ENCODE measurements at regions of chr11 and their contacts with region 1.

Region 1: GRCh38 chr11:96342961-96343711 is at the start of gene MAML2:
- DNase-seq: peak; percentile 85
- H3K4me3 Mint-ChIP-seq: peak within 1 kb of the TSS; percentile 94
- H3K27ac Mint-ChIP-seq: peak within 1 kb of the TSS; percentile 89
- H3K4me1 Mint-ChIP-seq: peaks cover 49% of the 10 kb centered on the region
- H3K27me3 Mint-ChIP-seq: no peaks in the 10 kb centered on the region
- total RNA-seq, gene MAML2: 10.0 and 10.1 TPM in 2 replicates

Region 2: DNA sequence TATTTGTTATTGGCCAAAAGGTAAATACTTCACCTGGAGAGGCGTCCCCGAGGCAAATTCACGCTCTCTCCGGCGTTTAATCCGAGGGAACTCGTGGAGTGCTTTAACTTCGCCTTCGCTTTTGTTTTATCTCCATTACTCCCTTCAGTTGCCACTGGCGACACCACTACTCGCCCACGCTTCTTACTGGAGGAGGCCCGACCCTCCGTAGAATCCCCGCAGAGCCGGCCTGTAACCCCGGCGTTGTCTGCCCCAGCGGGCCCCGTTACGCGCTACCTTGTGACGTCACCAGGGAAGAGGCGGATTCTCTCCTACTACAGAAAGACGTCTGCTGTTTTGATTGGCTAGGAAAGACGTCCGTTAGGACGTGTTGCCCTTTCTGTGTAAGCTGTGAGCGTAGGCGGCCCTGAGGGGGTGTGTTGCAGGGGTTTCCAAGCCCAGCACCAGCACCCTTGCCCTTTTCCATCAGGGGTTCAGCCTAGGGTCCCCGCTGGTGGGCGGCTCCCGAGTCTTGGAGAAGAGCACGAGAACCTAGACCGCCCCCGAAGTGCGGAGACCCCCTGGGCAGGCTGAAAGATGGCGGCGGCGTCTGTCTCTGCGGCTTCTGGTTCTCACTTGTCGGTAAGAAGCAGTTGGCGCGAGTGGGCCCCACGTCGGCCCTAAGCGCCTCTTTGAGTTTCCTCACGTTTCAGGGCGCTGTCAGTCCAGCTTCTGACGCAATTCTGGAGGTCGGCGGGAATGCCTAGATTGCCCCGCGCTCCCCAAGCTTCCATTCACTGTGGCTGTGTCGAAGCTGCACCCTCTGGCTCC is 552.8 kb before region 1 on chr11 and contains the start of gene CEP57:
- intact Hi-C with region 1: loop called (anchors 1 kb)
- DNase-seq: peak; percentile 93
- H3K4me3 Mint-ChIP-seq: peak within 1 kb of the TSS; percentile 96
- H3K27ac Mint-ChIP-seq: peak within 1 kb of the TSS; percentile 100
- H3K4me1 Mint-ChIP-seq: peaks cover 70% of the 10 kb centered on the region
- H3K27me3 Mint-ChIP-seq: no peaks in the 10 kb centered on the region
- total RNA-seq, gene CEP57: 77.1 and 77.7 TPM in 2 replicates

Region 3: DNA sequence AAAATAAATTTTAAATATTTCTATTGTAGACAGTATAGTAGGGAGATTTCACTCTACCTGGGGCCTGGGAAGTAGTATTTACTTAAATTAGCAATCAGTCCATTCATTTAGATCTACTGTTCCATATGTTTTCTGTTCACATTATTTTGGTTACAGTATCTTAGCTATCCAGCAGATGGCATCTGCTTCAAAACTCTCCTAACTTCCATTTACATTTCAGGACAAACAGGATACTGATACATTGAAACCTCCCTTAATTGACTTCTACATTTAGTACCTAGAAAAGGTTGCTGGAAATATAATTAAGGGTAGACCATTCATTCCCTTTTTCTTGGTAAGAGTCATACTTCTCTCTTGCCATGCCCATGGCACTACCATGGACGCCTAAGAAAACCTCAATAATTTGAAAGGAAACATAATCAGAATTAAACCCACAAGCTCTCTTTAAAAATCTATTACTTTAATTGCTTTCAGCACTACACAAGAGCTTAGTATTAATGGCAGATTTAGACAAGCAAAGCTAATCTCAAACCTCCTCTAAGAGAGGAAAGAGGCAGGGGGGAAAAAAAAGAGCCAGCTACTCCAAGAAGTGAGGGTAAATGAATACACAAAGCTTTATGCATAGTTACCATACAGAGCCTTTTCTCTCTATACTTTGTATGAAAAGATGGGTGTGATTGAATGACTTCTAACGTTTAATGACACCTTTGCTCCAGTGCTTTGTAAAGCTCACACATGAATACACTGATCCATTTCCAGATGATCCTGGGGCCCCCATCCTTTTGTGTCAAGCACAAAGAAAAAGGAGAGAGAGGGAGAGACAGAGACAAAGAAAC is 288.0 kb before region 1 on chr11:
- intact Hi-C with region 1: loop called (anchors 1 kb)
- DNase-seq: no peak
- H3K4me3 Mint-ChIP-seq: no peak overlapping the region
- H3K27ac Mint-ChIP-seq: no peak overlapping the region
- H3K4me1 Mint-ChIP-seq: peaks cover 60% of the 10 kb centered on the region
- H3K27me3 Mint-ChIP-seq: no peaks in the 10 kb centered on the region

Region 4: DNA sequence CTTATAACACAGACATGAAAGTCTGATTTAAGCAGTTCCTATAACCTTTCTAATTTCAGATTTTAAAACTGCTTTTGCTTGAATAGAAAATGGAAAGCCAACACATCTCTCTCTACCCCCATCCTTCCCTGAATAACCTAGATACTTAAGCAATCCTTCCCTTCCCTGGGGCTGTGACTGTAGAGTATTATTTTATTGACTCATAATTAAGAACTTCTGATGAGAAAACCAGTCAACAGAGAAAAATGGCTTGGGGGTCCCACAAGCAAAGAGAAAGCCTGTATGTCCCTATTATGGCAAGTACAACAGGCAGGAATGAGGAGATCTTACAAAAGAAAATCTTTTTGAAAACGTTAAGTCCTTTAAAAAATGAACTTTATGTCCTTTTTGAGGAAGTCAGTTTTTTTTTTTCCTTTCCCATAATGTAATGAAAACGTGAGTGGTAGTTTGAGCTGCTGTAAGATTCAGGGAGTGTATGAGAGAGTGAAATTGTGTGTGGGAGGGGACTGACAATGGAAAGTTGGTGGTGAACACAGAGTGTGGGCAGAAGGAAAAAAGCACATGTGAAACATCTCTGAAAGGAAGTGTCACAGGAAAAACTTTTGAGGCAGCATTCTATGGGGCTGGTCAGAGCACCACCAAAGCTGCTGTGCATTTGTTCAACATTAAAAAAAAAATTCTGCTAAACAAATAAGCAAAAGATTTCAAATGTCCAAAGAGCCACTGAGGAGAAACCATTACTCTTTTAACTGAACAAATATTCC is 154.7 kb before region 1 on chr11:
- intact Hi-C with region 1: loop called (anchors 1 kb)
- DNase-seq: no peak
- H3K4me3 Mint-ChIP-seq: peak overlapping the region; percentile 4
- H3K27ac Mint-ChIP-seq: peak overlapping the region; percentile 74
- H3K4me1 Mint-ChIP-seq: peaks cover 45% of the 10 kb centered on the region
- H3K27me3 Mint-ChIP-seq: no peaks in the 10 kb centered on the region

Region 5: GRCh38 chr11:96254087-96254486 is 89.0 kb before region 1 on chr11:
- intact Hi-C with region 1: loop called (anchors 1 kb)
- DNase-seq: peak; percentile 30
- H3K4me3 Mint-ChIP-seq: peak overlapping the region; percentile 77
- H3K27ac Mint-ChIP-seq: peak overlapping the region; percentile 92
- H3K4me1 Mint-ChIP-seq: peaks cover 75% of the 10 kb centered on the region
- H3K27me3 Mint-ChIP-seq: no peaks in the 10 kb centered on the region

Region 6: DNA sequence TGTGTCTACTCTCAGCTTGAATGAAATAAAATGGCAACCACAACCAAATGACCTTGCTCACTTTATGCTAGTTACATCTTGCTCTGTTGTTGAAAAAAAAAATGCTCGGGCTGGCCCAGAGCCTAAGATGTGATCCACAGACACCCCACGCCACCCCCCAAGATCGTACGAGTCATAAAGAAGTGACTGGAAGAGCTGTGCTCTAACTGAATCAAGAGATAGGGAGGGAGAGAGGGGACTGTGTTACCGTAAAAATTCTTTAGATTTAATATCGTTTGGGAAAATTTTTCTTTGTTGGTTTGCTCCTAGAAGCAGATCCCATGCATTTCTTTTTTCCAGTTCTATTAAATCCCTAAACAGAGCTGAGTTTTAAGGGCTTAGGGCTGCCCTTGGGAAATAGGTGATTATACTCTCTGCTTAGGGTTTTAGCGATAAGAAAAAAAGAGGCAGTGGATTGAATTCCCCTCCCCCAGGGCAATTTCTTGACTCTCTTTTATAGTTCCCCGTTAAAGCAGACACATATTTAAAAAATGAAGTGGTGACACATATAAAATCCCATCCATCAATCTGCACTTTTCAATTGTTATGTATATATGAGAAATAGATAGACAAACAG is 14.6 kb before region 1 on chr11:
- intact Hi-C with region 1: loop called (anchors 1 kb)
- DNase-seq: no peak
- H3K4me3 Mint-ChIP-seq: no peak overlapping the region
- H3K27ac Mint-ChIP-seq: no peak overlapping the region
- H3K4me1 Mint-ChIP-seq: peaks cover 57% of the 10 kb centered on the region
- H3K27me3 Mint-ChIP-seq: no peaks in the 10 kb centered on the region

Measured in activated T-helper 1 cell treated with anti-CD3 and anti-CD28 coated beads, Interleukin-12 subunit alpha, Interleukin-12 subunit beta, Interleukin-2, Interleukin-4 antibody, amounts not matched to agents 30 ng/mL and 10 ng/mL and 1 ng/mL, durations not matched to agents 14 hours and 24 hours and 36 hours (primary cell).